Activated CD4-positive, alpha-beta T cell treated with anti-CD3 and anti-CD28 coated beads for 36 hours (primary cell): ENCODE measurements at regions of chr12 and their contacts with region 1.

Region 1: DNA sequence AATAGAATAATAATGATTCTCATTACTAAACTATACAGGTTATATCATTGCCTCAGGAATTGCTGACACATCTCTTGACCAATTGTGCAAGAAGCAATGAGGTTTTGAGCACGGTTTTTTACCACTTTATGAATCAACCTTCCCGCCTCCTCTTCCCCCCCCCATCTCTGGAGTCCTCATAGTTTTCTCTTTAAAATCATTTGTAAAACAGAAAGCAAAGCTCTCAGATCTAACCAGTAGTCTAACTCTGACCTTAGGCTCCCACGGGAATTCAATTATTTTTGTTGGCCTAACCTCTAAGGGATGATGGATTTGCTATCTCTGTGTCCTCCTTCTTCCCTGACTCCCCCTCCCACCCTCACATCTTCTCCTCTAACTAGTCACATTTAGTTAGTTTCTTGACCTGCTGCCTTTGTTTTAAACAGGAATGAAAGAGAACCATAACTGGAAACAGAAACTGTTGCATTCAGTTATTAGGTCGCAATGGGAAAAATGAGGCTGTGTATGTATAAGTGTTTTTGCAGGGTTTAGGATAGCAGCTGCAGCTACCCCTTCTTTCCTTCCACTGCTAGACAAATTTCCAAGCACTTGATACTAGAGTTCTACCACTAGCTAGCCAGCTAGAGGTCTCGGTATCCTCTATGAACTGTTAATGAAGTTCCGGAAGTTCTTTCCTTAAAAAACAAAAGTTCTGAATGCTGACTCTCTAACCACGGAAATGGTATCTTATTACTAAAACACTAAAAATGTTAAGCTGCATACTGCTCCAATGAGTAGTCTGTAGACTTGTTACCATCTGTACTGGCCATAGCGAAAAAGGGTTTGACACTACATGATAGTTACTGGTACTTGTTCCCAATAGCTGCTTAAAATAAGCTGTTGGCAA is 65.4 kb downstream of the TAOK3 start:
- DNase-seq: peak; percentile 71
- ATAC-seq: peak; percentile 80
- H3K4me3 Mint-ChIP-seq: peak overlapping the region; percentile 66
- H3K27ac Mint-ChIP-seq: peak overlapping the region; percentile 92
- H3K4me1 Mint-ChIP-seq: peaks cover 43% of the 10 kb centered on the region
- H3K27me3 Mint-ChIP-seq: no peaks in the 10 kb centered on the region

Region 2: GRCh38 chr12:118328486-118329330 is 21.4 kb after region 1 on chr12:
- CTCF ChIA-PET with region 1: interaction called, 3 read pairs
- POLR2A ChIA-PET with region 1: no interaction called
- intact Hi-C with region 1: loop called in 1 of 2 experiments (anchors 2 kb)
- DNase-seq: no peak
- ATAC-seq: no peak
- H3K4me3 Mint-ChIP-seq: no peak overlapping the region
- H3K27ac Mint-ChIP-seq: no peak overlapping the region
- H3K4me1 Mint-ChIP-seq: peaks cover 35% of the 10 kb centered on the region
- H3K27me3 Mint-ChIP-seq: no peaks in the 10 kb centered on the region